WTC11 (cell line): ENCODE measurements at regions of chr9 and their contacts with region 1.

Region 1: GRCh38 chr9:113578882-113579282 is 115.4 kb downstream of the RGS3 start:
- DNase-seq: no peak
- ATAC-seq: no peak
- H3K4me3 Mint-ChIP-seq: no peak overlapping the region
- H3K27ac Mint-ChIP-seq: no peak overlapping the region
- H3K4me1 Mint-ChIP-seq: peaks cover 24% of the 10 kb centered on the region
- H3K27me3 Mint-ChIP-seq: no peaks in the 10 kb centered on the region
- CTCF ChIP-seq: no peak

Region 2: GRCh38 chr9:113508111-113508749 is 70.7 kb before region 1 on chr9:
- CTCF ChIA-PET with region 1: interaction called, 11 read pairs
- POLR2A ChIA-PET with region 1: no interaction called
- DNase-seq: peak; percentile 70
- ATAC-seq: peak; percentile 68
- H3K4me3 Mint-ChIP-seq: no peak overlapping the region
- H3K27ac Mint-ChIP-seq: no peak overlapping the region
- H3K4me1 Mint-ChIP-seq: peaks cover 19% of the 10 kb centered on the region
- H3K27me3 Mint-ChIP-seq: no peaks in the 10 kb centered on the region
- CTCF ChIP-seq: peak; percentile 23; the same call in 1 of the 2 replicates

Region 3: DNA sequence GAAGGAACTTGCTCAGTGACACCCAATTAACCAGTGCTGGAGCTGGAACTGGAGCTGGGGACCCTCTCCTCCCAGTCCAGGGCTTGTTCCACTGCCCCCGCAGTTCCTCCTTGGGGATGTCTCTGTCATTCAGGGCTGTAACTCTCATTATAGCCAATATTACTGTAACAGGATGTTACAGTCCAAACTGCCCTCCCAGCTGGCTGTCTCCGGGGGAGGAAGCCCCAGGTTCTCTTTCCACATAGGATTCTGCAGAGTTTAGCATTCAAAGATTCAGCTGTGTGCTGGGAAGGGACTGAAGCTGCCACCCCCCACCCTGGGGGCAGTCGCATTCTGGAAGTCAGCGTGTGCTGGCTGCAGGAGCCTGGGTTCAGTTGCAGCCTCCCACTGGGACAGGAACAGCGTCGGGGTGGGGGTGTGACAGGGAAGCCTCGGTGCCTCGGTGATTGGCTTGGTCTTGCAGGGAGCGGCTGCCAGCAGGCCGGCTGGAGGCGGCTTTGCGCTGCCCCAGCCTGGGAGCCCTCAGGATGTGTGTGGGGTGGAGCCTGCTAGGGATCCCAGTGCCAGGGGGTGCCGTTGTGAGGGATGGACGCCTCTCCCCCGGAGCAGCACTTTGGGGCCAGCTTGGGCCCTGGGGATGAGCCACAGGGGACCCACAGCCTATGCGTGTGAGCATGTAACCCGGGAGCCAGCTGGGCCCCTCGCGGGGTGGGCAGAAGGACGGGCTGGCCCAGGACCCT is 14.2 kb before region 1 on chr9:
- CTCF ChIA-PET with region 1: interaction called, 13 read pairs
- POLR2A ChIA-PET with region 1: interaction called, 4 read pairs
- DNase-seq: peak; percentile 64
- ATAC-seq: peak; percentile 90
- H3K4me3 Mint-ChIP-seq: peak overlapping the region; percentile 74
- H3K27ac Mint-ChIP-seq: no peak overlapping the region
- H3K4me1 Mint-ChIP-seq: peaks cover 17% of the 10 kb centered on the region
- H3K27me3 Mint-ChIP-seq: no peaks in the 10 kb centered on the region; the same call in 1 of the 2 replicates
- CTCF ChIP-seq: no peak